ENCODE measurements at regions of chr2 and their contacts with region 1.

Region 1: GRCh38 chr2:9984217-9984739 is 32.8 kb downstream of the GRHL1 start:
- DNase-seq: peak; percentile 62
- H3K4me3 Mint-ChIP-seq: no peak overlapping the region
- H3K27ac Mint-ChIP-seq: no peak overlapping the region
- H3K4me1 Mint-ChIP-seq: no peaks in the 10 kb centered on the region
- H3K27me3 Mint-ChIP-seq: no peaks in the 10 kb centered on the region
- CTCF ChIP-seq: peak; percentile 63

Region 2: DNA sequence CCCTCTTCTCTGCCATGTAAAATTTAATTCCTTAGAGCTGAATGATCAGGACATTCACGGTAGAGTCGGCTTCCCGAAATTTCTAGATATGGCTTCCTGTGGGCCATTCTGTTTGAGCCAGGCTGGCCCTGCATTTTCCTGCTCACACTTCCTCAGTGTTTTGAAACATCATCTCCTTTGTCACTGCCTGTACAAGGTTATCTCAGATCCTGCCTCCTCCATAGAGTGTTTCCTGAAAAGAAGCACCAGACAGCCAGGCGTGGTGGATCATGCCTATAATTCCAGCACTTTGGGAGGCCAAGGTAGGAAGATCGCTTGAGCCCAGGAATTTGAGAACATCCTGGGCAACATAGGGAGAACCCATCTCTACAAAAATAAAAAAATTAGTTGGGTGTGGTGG is 10.8 kb after region 1 on chr2:
- CTCF ChIA-PET with region 1: interaction called, 45 read pairs
- POLR2A ChIA-PET with region 1: interaction called, 3 read pairs
- intact Hi-C with region 1: no loop called
- DNase-seq: no peak
- H3K4me3 Mint-ChIP-seq: no peak overlapping the region
- H3K27ac Mint-ChIP-seq: no peak overlapping the region
- H3K4me1 Mint-ChIP-seq: no peaks in the 10 kb centered on the region
- H3K27me3 Mint-ChIP-seq: no peaks in the 10 kb centered on the region
- CTCF ChIP-seq: no peak

Region 3: GRCh38 chr2:10006236-10007161 is 22.2 kb after region 1 on chr2:
- CTCF ChIA-PET with region 1: interaction called, 13 read pairs
- POLR2A ChIA-PET with region 1: no interaction called
- intact Hi-C with region 1: no loop called
- DNase-seq: no peak
- H3K4me3 Mint-ChIP-seq: no peak overlapping the region
- H3K27ac Mint-ChIP-seq: no peak overlapping the region
- H3K4me1 Mint-ChIP-seq: no peaks in the 10 kb centered on the region
- H3K27me3 Mint-ChIP-seq: no peaks in the 10 kb centered on the region
- CTCF ChIP-seq: no peak

Region 4: DNA sequence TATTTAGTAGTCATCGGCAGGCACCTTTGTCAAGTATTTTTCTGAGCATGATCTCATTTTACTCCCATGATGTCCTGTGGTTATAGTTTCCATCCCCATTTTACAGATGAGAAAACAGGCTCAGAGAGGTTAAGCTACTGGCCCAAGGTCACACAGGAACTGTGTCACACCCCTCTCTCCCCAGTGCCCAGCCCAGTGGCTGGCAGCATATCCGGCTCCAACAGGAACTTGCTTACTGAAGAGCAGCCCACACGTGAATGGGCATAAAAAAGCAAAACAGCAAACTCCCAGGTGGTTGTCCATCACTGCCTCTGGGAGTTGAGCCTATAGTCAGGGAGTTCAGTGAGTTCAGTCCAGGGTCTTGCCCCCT is 50.8 kb after region 1 on chr2:
- CTCF ChIA-PET with region 1: interaction called, 18 read pairs
- POLR2A ChIA-PET with region 1: interaction called, 5 read pairs
- intact Hi-C with region 1: no loop called
- DNase-seq: no peak
- H3K4me3 Mint-ChIP-seq: no peak overlapping the region
- H3K27ac Mint-ChIP-seq: no peak overlapping the region
- H3K4me1 Mint-ChIP-seq: no peaks in the 10 kb centered on the region
- H3K27me3 Mint-ChIP-seq: no peaks in the 10 kb centered on the region
- CTCF ChIP-seq: no peak

Region 5: DNA sequence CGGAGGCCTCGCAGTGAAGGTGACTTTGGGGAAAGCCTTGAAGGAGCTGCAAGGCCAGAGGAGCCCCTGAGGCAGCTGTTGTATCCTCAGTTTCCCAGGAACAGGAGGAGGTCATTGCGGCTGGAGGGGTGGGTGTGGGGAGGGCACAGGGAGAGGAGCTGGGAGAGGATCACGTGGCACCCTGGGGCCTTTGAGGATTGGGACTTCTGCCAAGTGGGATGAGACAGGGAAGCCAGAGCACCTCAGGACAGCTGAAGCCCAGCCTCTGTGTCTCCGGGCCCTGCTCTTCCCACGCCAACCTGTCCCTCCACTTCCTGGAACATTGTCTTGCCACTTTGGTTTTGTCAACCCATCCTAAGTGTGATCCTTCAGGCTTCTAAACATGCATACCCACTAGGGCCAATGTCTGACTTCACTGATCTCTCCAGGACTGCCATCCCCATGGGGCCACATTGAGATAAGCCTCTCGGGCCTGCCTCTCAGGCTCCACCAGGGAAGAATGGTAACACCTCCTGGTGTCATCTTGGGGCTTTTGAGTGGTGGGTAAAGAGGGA is 119.0 kb after region 1 on chr2:
- CTCF ChIA-PET with region 1: no interaction called
- POLR2A ChIA-PET with region 1: no interaction called
- intact Hi-C with region 1: no loop called
- DNase-seq: peak; percentile 31
- H3K4me3 Mint-ChIP-seq: no peak overlapping the region
- H3K27ac Mint-ChIP-seq: no peak overlapping the region
- H3K4me1 Mint-ChIP-seq: peaks cover 3% of the 10 kb centered on the region
- H3K27me3 Mint-ChIP-seq: no peaks in the 10 kb centered on the region
- CTCF ChIP-seq: no peak

Region 6: DNA sequence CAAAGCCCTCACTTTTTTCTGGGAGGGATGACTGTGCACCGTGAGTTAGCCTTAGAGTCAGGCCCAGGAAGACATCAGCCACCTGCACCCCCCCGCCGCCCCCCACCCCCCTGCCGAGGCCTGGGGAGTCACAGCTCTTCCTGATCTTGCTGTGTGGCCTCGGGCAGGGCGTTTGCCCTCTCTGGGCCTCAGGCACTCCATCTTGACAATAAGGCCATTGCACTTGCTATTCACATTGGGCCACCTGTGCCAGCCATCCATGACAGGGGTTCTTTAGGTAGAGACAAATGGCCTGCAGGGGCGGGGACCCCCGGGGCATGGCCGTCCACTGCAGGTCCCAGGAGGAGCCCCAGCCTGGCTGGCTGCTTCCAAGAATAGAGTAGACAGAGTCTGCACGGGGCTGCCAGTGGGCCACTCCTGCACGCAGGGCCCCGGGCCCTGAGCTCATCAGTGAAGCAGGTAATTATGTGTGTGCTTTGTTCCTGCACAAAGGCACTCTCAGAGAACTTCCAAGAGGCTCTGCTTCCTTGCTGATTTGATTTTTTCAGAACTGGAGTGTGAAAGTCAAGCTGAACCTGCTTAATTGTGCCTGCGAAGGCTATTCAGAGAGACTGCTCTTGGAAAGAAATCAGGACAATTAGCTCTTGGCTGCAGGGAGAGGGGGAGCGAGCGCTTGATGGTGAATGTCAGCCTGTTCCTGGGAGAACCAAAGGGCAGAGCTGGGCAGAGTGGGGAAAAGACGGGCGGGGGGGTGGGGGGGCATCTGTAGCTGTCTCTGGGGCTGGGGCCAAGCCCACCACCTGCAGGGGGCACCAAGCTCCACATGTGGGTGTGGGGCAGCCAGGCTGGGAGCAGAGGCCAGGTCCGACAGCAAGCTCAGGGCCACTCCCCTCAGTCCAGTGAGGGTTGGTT is 178.6 kb after region 1 on chr2:
- CTCF ChIA-PET with region 1: no interaction called
- POLR2A ChIA-PET with region 1: no interaction called
- intact Hi-C with region 1: no loop called
- DNase-seq: no peak
- H3K4me3 Mint-ChIP-seq: no peak overlapping the region
- H3K27ac Mint-ChIP-seq: no peak overlapping the region
- H3K4me1 Mint-ChIP-seq: peaks cover 8% of the 10 kb centered on the region
- H3K27me3 Mint-ChIP-seq: no peaks in the 10 kb centered on the region
- CTCF ChIP-seq: no peak

Region 7: GRCh38 chr2:10216677-10217488 is 232.6 kb after region 1 on chr2:
- CTCF ChIA-PET with region 1: no interaction called
- POLR2A ChIA-PET with region 1: no interaction called
- intact Hi-C with region 1: no loop called
- DNase-seq: no peak
- H3K4me3 Mint-ChIP-seq: no peak overlapping the region
- H3K27ac Mint-ChIP-seq: no peak overlapping the region
- H3K4me1 Mint-ChIP-seq: no peaks in the 10 kb centered on the region
- H3K27me3 Mint-ChIP-seq: no peaks in the 10 kb centered on the region
- CTCF ChIP-seq: no peak

Measured in MCF 10A (cell line).